Activated naive CD4-positive, alpha-beta T cell treated with anti-CD3 and anti-CD28 coated beads, Interleukin-2, amount 10 ng/mL, durations not matched to agents 7 days and 5 days (primary cell): ENCODE measurements at regions of chr6 and their contacts with region 1.

Region 1: DNA sequence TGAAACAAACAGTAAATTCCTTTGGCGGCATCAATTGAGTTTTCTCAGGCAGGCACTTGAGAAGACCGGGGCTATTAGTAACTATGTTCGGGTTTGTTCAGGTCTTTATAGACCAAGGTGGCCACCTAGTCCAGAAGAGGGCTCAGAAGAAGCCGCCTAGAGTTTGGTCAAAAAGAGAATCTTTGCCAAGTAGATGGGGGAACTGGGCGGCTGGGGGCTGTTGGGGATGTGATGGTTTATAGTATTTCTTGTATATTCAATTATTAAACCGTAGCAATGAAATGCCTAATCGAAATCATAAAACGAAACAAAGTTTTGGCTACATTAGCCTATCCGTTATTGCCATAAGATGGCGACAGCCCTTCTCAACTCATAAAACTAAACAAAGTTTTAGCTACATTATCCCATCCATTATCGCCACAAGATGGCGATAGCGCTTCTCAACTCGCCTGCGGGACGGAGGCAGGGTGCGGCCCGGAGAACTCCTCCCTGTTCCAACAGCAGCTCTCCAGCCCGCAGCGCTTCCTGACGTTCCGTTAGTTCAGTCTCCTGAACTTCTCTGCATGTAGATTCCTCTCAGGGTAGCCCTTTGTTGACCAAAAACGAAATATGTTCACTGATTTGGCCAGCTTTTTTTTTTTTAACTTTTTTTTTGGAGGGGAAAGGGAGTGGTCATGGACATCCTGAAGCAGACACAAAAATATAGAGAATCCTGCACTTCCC is 120.5 kb upstream of the PRSS16 start:
- DNase-seq: peak; percentile 91
- H3K4me3 Mint-ChIP-seq: peak overlapping the region; percentile 77
- H3K27ac Mint-ChIP-seq: peak overlapping the region; percentile 89
- H3K4me1 Mint-ChIP-seq: peaks cover 65% of the 10 kb centered on the region
- H3K27me3 Mint-ChIP-seq: no peaks in the 10 kb centered on the region

Region 2: DNA sequence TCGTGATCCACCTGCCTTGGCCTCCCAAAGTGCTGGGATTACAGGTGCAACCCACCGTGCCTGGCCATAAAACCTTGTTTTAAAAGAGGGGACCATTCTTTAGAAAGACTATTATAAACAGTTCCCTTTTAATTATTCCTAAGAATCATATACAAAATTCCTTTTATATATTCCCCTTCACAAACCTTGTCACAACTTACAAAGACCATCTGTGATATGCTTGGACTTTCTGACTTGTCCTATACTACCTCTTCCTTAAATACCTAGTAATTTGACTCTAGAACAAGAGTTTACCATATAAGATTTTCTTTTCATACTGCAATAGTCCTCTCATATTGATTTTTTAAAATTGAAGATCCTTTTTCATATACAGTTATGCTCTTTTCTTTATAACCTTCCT is 15.2 kb before region 1 on chr6:
- CTCF ChIA-PET with region 1: no interaction called
- DNase-seq: no peak
- H3K4me3 Mint-ChIP-seq: no peak overlapping the region
- H3K27ac Mint-ChIP-seq: no peak overlapping the region
- H3K4me1 Mint-ChIP-seq: no peaks in the 10 kb centered on the region
- H3K27me3 Mint-ChIP-seq: no peaks in the 10 kb centered on the region

Region 3: DNA sequence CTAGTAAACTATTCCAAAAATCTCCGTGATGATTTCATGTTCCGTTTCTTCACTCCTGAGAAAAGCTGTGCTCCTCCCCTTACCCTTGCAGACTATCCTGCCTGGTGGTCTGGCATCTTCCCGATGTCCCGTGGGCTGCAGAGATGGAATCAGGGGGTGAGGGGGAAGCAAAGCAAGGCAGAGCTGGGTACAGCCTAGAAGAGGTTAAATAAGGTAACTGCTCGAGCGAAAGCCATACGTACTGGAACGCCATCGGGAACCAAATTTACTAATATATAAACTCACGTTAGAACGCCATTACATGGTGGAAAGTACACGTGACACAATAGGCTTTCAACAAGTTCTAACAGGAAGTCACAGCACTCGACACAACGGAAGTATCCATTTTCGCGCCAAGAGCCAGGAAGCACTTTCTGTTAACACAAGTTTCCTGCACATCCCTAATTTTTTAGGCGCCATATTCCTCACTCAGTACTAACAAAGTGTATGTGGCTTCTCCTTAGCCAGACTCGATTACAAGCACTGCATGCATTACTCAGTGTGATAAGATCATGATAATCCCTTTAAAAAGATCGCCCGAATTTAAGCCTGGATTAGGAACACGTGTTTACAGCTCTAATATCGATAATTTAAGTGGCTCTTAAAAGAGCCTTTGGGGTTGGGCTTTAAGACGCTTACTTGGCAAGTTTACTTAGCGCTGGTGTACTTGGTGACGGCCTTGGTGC is 18.9 kb after region 1 on chr6:
- CTCF ChIA-PET with region 1: interaction called, 11 read pairs
- DNase-seq: peak; percentile 86
- H3K4me3 Mint-ChIP-seq: no peak overlapping the region
- H3K27ac Mint-ChIP-seq: no peak overlapping the region
- H3K4me1 Mint-ChIP-seq: peaks cover 28% of the 10 kb centered on the region
- H3K27me3 Mint-ChIP-seq: no peaks in the 10 kb centered on the region

Region 4: GRCh38 chr6:27154696-27155095 is 27.7 kb after region 1 on chr6:
- CTCF ChIA-PET with region 1: interaction called, 14 read pairs
- DNase-seq: no peak
- H3K4me3 Mint-ChIP-seq: peak overlapping the region; percentile 57
- H3K27ac Mint-ChIP-seq: peak overlapping the region; percentile 93
- H3K4me1 Mint-ChIP-seq: peaks cover 45% of the 10 kb centered on the region
- H3K27me3 Mint-ChIP-seq: no peaks in the 10 kb centered on the region